ENCODE measurements at regions of chr13 and their contacts with region 1.

Region 1: GRCh38 chr13:31199849-31200636 is at the start of gene B3GLCT:
- DNase-seq: peak; percentile 87
- ATAC-seq: peak; percentile 81
- H3K4me3 Mint-ChIP-seq: peak within 1 kb of the TSS; percentile 71
- H3K27ac Mint-ChIP-seq: peak within 1 kb of the TSS; percentile 58
- H3K4me1 Mint-ChIP-seq: peaks cover 34% of the 10 kb centered on the region
- H3K27me3 Mint-ChIP-seq: no peaks in the 10 kb centered on the region
- total RNA-seq, gene B3GLCT: 2.1 to 2.4 TPM

Region 2: GRCh38 chr13:31167490-31167889 is 32.6 kb before region 1 on chr13:
- CTCF ChIA-PET with region 1: interaction called, 10 read pairs
- POLR2A ChIA-PET with region 1: no interaction called
- intact Hi-C with region 1: loop called (anchors 1 kb)
- DNase-seq: no peak
- ATAC-seq: peak; percentile 36
- H3K4me3 Mint-ChIP-seq: no peak overlapping the region
- H3K27ac Mint-ChIP-seq: no peak overlapping the region
- H3K4me1 Mint-ChIP-seq: peaks cover 11% of the 10 kb centered on the region
- H3K27me3 Mint-ChIP-seq: no peaks in the 10 kb centered on the region

Region 3: DNA sequence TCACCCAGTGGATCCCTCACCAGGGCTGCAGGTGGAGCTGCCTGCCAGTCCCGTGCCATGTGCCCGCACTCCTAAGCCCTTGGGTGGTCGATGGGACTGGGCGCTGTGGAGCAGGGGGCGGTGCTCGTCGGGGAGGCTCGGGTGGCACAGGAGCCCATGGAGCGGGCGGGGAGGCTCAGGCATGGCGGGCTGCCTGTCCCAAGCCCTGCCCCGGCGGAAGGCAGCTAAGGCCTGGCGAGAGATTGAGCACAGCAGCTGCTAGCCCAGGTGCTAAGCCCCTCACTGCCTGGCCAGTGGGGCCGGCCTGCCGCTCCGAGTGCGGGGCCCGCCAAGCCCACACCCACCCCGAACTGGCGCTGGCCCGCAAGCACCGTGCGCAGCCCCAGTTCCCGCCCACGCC is 17.1 kb before region 1 on chr13:
- CTCF ChIA-PET with region 1: no interaction called
- POLR2A ChIA-PET with region 1: no interaction called
- intact Hi-C with region 1: no loop called
- DNase-seq: no peak
- ATAC-seq: no peak
- H3K4me3 Mint-ChIP-seq: no peak overlapping the region
- H3K27ac Mint-ChIP-seq: no peak overlapping the region
- H3K4me1 Mint-ChIP-seq: no peaks in the 10 kb centered on the region
- H3K27me3 Mint-ChIP-seq: no peaks in the 10 kb centered on the region

Region 4: DNA sequence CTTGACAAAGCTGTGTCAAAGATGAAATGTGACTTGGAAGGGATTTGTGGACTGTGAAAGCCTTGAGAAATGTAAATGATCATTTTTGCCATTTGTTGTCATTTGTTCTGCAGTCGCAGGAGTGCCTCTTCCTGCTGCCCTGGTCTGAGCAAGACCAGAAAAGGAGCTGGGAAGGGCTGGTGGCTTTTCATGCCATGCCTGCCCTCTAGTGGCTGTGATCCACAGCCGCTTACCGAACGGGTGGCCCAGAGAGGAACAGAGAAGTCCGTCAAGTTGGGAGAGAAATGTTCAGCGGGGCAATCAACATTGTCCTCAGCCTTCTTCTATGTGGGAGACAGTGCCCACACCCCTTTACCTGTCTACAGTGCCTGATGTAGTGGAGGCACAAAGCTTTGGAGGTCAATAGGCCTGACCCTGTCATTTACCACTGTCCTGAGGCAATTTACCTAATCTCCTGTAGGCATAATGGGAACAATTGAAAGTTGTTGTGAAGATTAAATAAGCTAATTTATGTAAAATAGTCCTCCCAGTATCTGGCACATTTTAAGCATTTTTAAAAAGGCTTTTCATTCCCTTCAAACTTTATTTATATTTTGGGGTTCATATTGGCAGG is 224.2 kb after region 1 on chr13:
- CTCF ChIA-PET with region 1: no interaction called
- POLR2A ChIA-PET with region 1: no interaction called
- intact Hi-C with region 1: loop called in 1 of 2 experiments (anchors 1 kb)
- DNase-seq: peak; percentile 79
- ATAC-seq: peak; percentile 92
- H3K4me3 Mint-ChIP-seq: no peak overlapping the region
- H3K27ac Mint-ChIP-seq: no peak overlapping the region
- H3K4me1 Mint-ChIP-seq: peaks cover 3% of the 10 kb centered on the region
- H3K27me3 Mint-ChIP-seq: peaks cover 17% of the 10 kb centered on the region

Region 5: DNA sequence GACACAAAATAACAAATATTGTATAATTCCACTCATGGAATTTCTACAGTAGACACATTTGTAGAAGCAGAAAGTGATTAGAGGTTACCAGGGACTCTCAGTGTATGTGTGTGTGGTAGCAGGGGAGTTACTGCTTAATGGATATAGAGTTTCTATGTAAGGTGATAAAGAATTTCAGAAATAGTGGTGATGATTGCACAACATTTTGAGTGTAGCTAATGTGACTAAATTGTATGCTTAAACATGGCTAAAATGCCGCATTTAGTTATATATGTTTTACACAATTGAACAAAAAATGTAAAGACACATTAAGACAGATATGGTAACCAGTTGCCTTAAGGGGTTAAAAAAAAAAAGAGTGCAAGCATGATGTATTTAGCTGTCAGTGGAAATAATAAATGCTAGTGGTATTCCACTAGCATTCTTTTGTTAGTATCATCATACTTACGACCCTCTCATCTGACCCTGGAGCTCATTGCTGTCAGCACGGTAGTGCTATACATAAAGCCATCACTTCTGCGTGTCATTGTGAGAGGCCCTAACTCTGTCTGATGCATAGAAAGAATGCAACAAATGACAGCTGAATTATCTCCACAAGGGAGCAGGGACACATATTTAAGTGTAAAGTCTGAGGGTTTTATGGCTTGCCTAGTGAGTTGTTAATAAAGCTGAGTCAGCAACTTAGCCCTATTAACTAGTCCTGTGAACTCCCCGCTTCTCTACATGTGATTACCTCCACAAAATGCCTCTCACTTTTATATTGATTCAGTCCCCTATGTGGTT is 405.2 kb after region 1 on chr13:
- CTCF ChIA-PET with region 1: no interaction called
- POLR2A ChIA-PET with region 1: no interaction called
- intact Hi-C with region 1: no loop called
- DNase-seq: no peak
- ATAC-seq: no peak
- H3K4me3 Mint-ChIP-seq: no peak overlapping the region
- H3K27ac Mint-ChIP-seq: no peak overlapping the region
- H3K4me1 Mint-ChIP-seq: no peaks in the 10 kb centered on the region
- H3K27me3 Mint-ChIP-seq: no peaks in the 10 kb centered on the region

Measured in activated CD4-positive, alpha-beta T cell treated with anti-CD3 and anti-CD28 coated beads for 36 hours (primary cell).